ENCODE measurements at regions of chr19 and their contacts with region 1.

Region 1: GRCh38 chr19:43595999-43596841 is at the starts of genes IRGQ and ZNF576:
- DNase-seq: peak; percentile 99
- H3K4me3 ChIP-seq: peak within 1 kb of the TSS; percentile 78
- H3K27ac ChIP-seq: peak within 1 kb of the TSS; percentile 96
- H3K4me1 ChIP-seq: peaks cover 12% of the 10 kb centered on the region
- H3K27me3 ChIP-seq: no peaks in the 10 kb centered on the region
- CTCF ChIP-seq: no peak; the same call in 1 of the 2 replicates
- total RNA-seq, gene IRGQ: 34.1 and 37.7 TPM in 2 replicates
- total RNA-seq, gene ZNF576: 19.2 and 20.3 TPM in 2 replicates

Region 2: DNA sequence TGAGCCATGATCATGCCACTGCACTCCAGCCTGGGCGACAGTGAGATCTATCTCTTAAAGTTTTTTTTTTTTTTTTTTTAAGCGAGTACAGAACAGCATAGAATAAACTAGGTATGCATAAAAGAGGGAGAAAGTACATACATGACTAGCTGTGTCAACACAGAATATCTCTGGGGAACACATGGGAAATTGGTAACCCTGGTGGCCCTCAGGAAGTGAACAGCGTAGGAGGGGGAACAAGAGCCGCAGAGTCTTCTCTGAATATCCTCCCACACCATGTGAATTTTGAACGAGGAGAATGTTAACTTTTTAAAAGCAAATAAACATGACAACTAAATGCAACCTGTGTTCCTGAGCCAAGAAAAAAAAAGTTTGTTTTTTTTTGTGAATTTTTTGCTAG is 106.9 kb before region 1 on chr19:
- CTCF ChIA-PET with region 1: no interaction called
- POLR2A ChIA-PET with region 1: no interaction called
- intact Hi-C with region 1: no loop called
- DNase-seq: no peak
- H3K4me3 ChIP-seq: no peak overlapping the region
- H3K27ac ChIP-seq: no peak overlapping the region
- H3K4me1 ChIP-seq: no peaks in the 10 kb centered on the region
- H3K27me3 ChIP-seq: no peaks in the 10 kb centered on the region
- CTCF ChIP-seq: no peak

Region 3: GRCh38 chr19:43532962-43533545 is 63.2 kb before region 1 on chr19 and contains the start of gene ZNF575:
- CTCF ChIA-PET with region 1: interaction called, 15 read pairs
- POLR2A ChIA-PET with region 1: interaction called, 4 read pairs
- intact Hi-C with region 1: loop called (anchors 2 kb)
- DNase-seq: peak; percentile 97
- H3K4me3 ChIP-seq: peak within 1 kb of the TSS; percentile 63
- H3K27ac ChIP-seq: peak within 1 kb of the TSS; percentile 86
- H3K4me1 ChIP-seq: peaks cover 15% of the 10 kb centered on the region
- H3K27me3 ChIP-seq: no peaks in the 10 kb centered on the region
- CTCF ChIP-seq: no peak
- total RNA-seq, gene ZNF575: 2.8 and 3.1 TPM in 2 replicates

Region 4: GRCh38 chr19:43575156-43575950 is 20.9 kb before region 1 on chr19 and contains the starts of genes PINLYP and XRCC1:
- CTCF ChIA-PET with region 1: no interaction called
- POLR2A ChIA-PET with region 1: no interaction called
- intact Hi-C with region 1: loop called (anchors 1 kb)
- DNase-seq: peak; percentile 99
- H3K4me3 ChIP-seq: peak within 1 kb of the TSS; percentile 94
- H3K27ac ChIP-seq: peak within 1 kb of the TSS; percentile 94
- H3K4me1 ChIP-seq: peaks cover 16% of the 10 kb centered on the region
- H3K27me3 ChIP-seq: no peaks in the 10 kb centered on the region
- CTCF ChIP-seq: no peak
- total RNA-seq, gene PINLYP: 14.3 and 15.6 TPM in 2 replicates
- total RNA-seq, gene XRCC1: 69.4 and 86.0 TPM in 2 replicates

Region 5: DNA sequence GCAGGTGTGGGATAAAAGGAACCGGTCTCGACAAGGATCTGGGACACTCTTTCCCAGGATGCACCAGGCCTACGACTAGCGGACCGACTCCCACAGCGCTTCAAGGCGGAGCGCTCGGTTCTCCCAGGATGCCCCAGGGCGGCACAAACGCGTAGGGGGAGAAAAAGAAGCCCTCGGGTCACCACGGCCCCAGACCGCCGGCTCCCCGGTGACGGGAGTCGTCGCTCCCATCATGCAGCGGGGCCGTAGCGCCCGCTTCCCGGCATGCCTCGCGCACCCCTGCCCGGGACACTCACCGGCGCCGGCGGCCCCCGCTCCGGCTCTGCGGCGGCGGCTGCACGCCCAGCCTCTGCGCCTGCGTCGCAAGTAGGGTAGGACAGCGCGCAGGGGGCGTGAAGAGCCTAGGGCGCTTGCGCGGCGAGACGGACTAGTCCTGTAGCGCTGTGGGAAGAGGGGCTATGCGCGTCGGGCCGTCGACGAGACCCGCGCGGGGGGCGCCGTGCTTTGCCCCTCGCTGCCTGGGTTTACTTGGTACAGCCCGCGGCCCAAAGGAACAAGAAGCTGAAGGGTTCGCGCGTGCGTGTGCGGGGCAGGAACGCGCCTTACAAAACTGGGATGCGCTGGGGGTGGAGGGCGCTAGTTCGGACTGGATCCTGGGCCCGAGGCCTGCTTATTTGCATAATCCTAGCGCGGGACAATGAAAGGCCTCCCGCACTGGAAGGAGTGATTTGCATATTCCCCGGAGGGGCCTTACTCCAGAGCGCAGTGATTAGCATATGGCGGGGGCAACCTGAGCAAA is 23.2 kb after region 1 on chr19 and contains the start of gene ZNF428:
- CTCF ChIA-PET with region 1: no interaction called
- POLR2A ChIA-PET with region 1: no interaction called
- intact Hi-C with region 1: loop called (anchors 1 kb)
- DNase-seq: peak; percentile 98
- H3K4me3 ChIP-seq: peak within 1 kb of the TSS; percentile 60
- H3K27ac ChIP-seq: peak within 1 kb of the TSS; percentile 96
- H3K4me1 ChIP-seq: peaks cover 9% of the 10 kb centered on the region
- H3K27me3 ChIP-seq: no peaks in the 10 kb centered on the region
- CTCF ChIP-seq: no peak
- total RNA-seq, gene ZNF428: 65.7 and 72.4 TPM in 2 replicates